ENCODE measurements at regions of chr1 and their contacts with region 1.

Region 1: GRCh38 chr1:7983086-7983778 is 21.7 kb downstream of the PARK7 start:
- DNase-seq: no peak
- H3K4me3 Mint-ChIP-seq: no peak overlapping the region
- H3K27ac Mint-ChIP-seq: peak overlapping the region; percentile 54
- H3K4me1 Mint-ChIP-seq: peaks cover 6% of the 10 kb centered on the region
- H3K27me3 Mint-ChIP-seq: no peaks in the 10 kb centered on the region
- CTCF ChIP-seq: no peak

Region 2: DNA sequence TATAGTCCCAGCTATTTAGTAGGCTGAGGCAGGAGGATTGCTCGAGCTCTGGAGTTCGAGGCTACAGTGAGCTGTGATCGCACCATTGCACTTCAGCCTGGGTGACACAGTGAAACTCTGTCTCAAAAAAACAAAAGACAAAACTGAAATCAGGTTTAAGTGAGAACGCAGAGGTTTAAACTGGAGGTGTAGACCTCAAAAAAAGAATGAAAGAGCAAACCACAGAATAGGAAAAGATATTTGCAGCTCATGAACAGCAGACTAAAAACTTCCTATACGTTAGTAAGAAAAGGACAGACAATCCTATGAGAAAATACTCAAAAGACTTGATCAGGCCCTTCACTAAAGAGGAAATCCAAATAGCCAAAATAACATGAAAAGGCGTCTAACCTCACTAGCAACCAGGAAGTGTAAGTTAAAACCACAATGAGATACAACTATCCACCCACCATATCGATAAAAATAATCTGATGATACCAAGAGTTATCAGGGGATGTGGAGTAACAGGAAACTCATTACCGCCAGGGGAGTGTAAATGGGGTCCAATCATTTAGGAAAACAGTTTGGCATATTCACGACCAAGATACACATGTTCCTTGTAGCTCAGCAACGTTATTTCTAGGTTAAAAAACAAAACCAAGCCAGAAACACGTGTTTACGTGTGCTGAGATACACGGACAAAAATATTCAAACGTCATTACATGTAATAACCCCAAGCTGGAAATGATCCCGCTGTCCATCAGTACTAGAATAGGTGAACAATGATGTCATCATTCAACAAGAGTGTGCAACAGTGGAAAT is 52.4 kb before region 1 on chr1:
- CTCF ChIA-PET with region 1: no interaction called
- POLR2A ChIA-PET with region 1: no interaction called
- intact Hi-C with region 1: no loop called
- DNase-seq: no peak
- H3K4me3 Mint-ChIP-seq: no peak overlapping the region
- H3K27ac Mint-ChIP-seq: no peak overlapping the region
- H3K4me1 Mint-ChIP-seq: no peaks in the 10 kb centered on the region
- H3K27me3 Mint-ChIP-seq: peaks cover 50% of the 10 kb centered on the region
- CTCF ChIP-seq: no peak

Region 3: GRCh38 chr1:8004803-8005554 is 21.7 kb after region 1 on chr1:
- CTCF ChIA-PET with region 1: interaction called, 8 read pairs
- POLR2A ChIA-PET with region 1: interaction called, 35 read pairs
- intact Hi-C with region 1: loop called (anchors 1 kb)
- DNase-seq: peak; percentile 99
- H3K4me3 Mint-ChIP-seq: peak overlapping the region; percentile 57
- H3K27ac Mint-ChIP-seq: peak overlapping the region; percentile 84
- H3K4me1 Mint-ChIP-seq: peaks cover 38% of the 10 kb centered on the region
- H3K27me3 Mint-ChIP-seq: no peaks in the 10 kb centered on the region
- CTCF ChIP-seq: no peak

Region 4: DNA sequence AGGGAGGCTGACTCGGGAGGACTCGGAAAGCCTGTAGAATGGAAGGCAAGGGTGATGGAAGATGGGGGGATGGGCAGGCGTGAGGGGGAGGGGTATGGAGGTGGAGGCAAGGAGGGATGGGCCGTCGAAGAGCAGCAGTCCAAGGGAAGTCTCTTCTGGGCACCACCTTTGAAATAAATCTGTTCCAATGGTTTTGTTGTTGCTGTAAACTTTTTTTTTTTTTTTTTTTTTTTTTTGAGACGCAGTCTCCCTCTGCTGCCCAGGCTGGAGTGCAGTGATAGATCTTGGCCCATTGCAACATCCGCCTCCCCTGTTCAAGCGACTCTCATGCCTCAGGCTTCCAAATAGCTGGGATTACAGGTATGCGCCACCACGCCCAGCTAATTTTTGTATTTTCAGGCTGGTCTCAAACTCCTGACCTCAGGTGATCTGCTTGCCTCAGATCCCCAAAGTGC is 255.6 kb after region 1 on chr1:
- CTCF ChIA-PET with region 1: interaction called, 5 read pairs
- POLR2A ChIA-PET with region 1: interaction called, 3 read pairs
- intact Hi-C with region 1: loop called (anchors 5 kb)
- DNase-seq: peak; percentile 88
- H3K4me3 Mint-ChIP-seq: no peak overlapping the region
- H3K27ac Mint-ChIP-seq: peak overlapping the region; percentile 86
- H3K4me1 Mint-ChIP-seq: peaks cover 14% of the 10 kb centered on the region
- H3K27me3 Mint-ChIP-seq: no peaks in the 10 kb centered on the region
- CTCF ChIP-seq: peak; percentile 37

Region 5: DNA sequence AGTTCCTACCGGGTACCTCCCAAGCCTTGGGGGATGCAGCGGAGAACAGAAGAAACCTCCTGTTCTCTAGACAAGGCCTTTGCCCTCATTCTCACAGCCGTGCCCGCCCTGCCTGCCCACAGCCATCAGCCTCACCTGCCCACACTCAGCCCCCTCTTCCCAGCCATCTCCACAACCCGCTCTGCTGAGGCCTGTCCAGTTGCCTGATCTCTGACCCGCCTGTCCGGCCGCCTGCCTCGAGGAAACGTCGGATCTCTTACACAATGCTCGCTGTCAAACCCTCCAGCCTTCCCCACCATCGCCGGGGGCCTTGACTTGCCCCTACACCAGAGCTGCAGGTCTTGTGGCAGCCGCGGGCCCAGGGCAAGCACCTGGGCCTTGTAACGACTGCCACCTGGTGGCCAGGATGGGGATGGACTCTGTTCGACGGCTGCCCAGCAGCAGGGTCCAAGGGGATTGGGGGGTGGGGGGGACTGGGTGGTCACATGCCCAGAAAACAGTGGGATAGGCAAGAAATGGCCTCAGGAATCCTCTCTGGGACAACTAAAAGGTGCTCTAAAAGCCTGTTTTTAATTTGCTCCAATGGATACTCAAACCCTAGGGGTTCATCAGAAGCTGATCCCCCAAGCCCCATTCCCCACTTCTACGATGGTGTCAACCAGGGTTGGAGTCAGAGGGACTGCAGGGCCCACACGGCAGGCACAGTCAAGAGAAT is 365.7 kb after region 1 on chr1:
- CTCF ChIA-PET with region 1: interaction called, 10 read pairs
- POLR2A ChIA-PET with region 1: no interaction called
- intact Hi-C with region 1: loop called (anchors 2 kb)
- DNase-seq: peak; percentile 67
- H3K4me3 Mint-ChIP-seq: no peak overlapping the region
- H3K27ac Mint-ChIP-seq: peak overlapping the region; percentile 5
- H3K4me1 Mint-ChIP-seq: peaks cover 20% of the 10 kb centered on the region
- H3K27me3 Mint-ChIP-seq: peaks cover 14% of the 10 kb centered on the region
- CTCF ChIP-seq: peak; percentile 89